GM23248 (cell line): ENCODE measurements at regions of chr4 and their contacts with region 1.

Region 1: DNA sequence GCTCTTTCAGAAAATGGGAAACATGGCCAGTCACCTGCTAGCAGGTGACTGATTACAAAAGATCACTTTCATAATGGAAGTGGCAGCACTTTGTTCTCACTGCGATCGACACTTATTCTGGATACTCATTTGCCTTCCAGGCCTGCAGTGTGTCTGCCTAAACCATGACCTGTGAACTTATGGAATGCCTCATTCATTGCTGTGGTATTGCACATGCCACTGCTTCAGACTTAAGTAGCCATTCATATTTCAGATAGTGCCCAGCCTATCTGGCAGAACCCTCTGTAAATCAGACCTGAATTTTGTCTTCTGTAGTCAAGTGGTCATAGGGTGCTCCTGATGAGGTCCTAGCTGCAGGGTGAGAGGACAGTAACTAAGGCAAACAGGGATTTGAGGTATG is 23.3 kb upstream of the MGST2 start:
- DNase-seq: peak; percentile 73
- H3K4me3 ChIP-seq: no peak overlapping the region
- H3K27ac ChIP-seq: no peak overlapping the region
- H3K4me1 ChIP-seq: peaks cover 22% of the 10 kb centered on the region
- H3K27me3 ChIP-seq: no peaks in the 10 kb centered on the region

Region 2: DNA sequence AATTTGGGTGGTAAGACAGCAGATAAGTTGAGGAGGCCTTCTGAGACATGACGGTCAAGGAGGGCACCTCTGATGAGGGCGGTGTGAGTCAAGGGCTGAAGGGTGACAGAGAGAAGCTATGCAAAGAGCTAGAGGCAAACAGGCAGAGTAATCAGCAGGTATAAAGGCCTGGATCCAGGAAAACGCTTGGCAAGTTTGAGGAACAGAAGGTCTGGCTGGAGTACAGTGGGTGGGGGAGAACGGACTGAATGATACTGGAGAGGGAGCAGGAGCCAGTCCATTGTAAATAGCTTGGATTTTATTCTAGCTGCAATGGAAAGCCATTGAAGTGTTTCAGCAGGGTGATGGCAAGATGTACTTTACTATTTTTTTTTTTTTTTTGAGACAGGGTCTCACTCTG is 149.2 kb before region 1 on chr4:
- in situ Hi-C with region 1: loop called (anchors 10 kb)
- DNase-seq: no peak
- H3K4me3 ChIP-seq: no peak overlapping the region
- H3K27ac ChIP-seq: no peak overlapping the region
- H3K4me1 ChIP-seq: no peaks in the 10 kb centered on the region
- H3K27me3 ChIP-seq: no peaks in the 10 kb centered on the region